ENCODE measurements at regions of chr2 and their contacts with region 1.

Region 1: GRCh38 chr2:19358242-19359020 is at the start of gene OSR1:
- DNase-seq: peak; percentile 15

Region 2: DNA sequence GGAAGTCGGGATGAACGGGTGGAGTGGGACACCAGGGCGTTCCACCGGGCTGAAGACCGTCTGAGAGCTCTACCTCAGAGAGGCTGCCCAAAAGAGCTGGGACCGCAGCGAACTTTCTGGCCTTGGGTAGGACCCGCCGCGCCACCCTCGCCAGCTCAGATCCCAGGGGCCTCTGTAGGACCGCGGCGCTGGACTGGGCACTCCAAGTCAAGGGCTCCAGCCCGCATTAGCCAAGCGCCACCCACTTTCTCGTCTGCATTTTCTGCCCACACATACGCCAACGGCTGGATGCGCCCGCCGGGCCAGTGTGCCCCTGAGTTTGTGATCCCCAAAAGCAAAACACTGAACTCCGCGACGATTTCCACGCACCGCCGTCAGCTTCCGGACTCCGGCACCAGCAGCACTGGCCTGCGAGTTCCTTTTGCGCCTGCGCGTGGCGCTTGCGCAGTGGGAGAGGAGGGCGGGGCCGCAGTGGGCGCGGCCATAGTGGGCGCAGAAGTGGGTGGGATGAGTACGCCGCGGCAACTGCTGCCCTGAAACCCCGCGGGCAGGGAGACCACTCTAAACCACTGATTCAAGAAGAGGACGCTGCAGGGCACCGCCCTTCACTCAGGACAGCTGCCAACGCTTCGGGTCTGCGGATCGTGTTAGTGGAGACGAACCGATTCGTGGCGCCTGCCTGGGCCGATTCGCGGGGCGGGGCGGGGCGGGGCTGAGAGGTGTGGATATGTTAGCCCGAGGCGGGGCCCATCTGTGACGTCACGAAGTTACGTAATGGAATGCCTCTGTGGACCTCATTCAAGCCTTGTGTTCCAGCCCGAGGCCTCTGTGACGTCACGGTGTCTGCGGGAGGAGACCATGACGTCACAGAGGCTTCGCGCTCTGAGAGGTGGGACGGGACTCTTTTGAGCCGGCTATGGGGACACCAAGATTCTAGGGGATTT is 10.5 kb before region 1 on chr2:
- CTCF ChIA-PET with region 1: interaction called, 4 read pairs
- POLR2A ChIA-PET with region 1: interaction called, 14 read pairs
- DNase-seq: peak; percentile 93